ENCODE measurements at regions of chr1 and their contacts with region 1.

Region 1: GRCh38 chr1:55060133-55060999 is 21.0 kb downstream of the PCSK9 start:
- DNase-seq: no peak
- H3K4me3 ChIP-seq: no peak overlapping the region
- H3K27ac ChIP-seq: no peak overlapping the region
- H3K4me1 ChIP-seq: peaks cover 0 to 22% of the 10 kb centered on the region in 2 experiments; a peak in 2 of 4 replicates
- H3K27me3 ChIP-seq: no peaks in the 10 kb centered on the region
- CTCF ChIP-seq: no peak
- EP300 ChIP-seq: no peak
- RAD21 ChIP-seq: no peak

Region 2: DNA sequence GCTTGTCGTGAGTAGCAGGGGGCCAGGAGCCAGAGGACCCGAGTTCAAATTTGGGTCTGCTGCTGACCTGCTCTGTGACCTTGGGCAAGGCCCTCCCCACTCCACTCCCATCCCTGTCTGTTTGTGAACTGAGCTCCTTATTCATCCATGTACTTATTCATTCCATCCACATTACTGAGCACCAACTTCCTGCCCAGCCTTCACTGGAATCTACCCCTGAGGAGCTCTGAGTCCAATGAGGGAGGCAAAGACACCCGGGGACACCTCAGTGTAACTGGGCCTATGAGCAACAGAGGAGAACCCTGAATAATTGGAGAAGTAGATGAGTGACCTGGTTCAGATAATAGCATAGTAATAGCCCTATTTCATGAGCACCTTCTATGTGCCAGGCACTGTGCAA is 52.7 kb before region 1 on chr1:
- CTCF ChIA-PET with region 1: no interaction called
- POLR2A ChIA-PET with region 1: no interaction called
- DNase-seq: no peak
- H3K4me3 ChIP-seq: no peak overlapping the region
- H3K27ac ChIP-seq: 0 out of 4 replicates have a peak overlapping the region, but pooled peaks of 1 of the 2 experiments have one; percentile 3
- H3K4me1 ChIP-seq: peaks cover 0 to 4% of the 10 kb centered on the region in 2 experiments; a peak in 1 of 4 replicates
- H3K27me3 ChIP-seq: no peaks in the 10 kb centered on the region
- CTCF ChIP-seq: no peak
- EP300 ChIP-seq: no peak
- RAD21 ChIP-seq: no peak

Region 3: DNA sequence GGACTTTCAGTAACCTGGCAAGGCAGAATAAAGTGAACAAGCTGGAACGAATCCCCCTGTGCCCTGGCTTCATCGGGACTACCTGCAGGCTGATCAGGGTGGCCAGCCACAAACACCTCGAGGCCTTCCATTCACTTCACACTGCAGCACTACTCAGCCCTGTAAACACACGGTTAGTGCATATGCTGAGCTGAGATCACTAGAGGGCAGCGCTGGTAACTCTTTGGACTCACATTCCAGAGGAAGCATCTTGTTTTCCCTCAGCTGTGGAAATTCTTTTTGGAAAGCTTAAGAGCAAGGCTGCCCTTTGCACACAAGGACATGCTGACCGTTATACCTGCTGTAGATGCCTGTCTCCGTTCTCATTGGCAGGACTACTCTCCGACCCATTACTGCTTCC is 11.1 kb after region 1 on chr1:
- CTCF ChIA-PET with region 1: interaction called, 15 read pairs
- POLR2A ChIA-PET with region 1: no interaction called
- DNase-seq: peak; percentile 53
- H3K4me3 ChIP-seq: no peak overlapping the region
- H3K27ac ChIP-seq: no peak overlapping the region; a peak in 1 of 4 replicates
- H3K4me1 ChIP-seq: peaks cover 0 to 8% of the 10 kb centered on the region in 2 experiments; a peak in 1 of 4 replicates
- H3K27me3 ChIP-seq: no peaks in the 10 kb centered on the region
- CTCF ChIP-seq: peak; percentile 61
- EP300 ChIP-seq: no peak
- RAD21 ChIP-seq: peak; percentile 54

Region 4: GRCh38 chr1:55107101-55107500 is 46.7 kb after region 1 on chr1:
- CTCF ChIA-PET with region 1: no interaction called
- POLR2A ChIA-PET with region 1: no interaction called
- DNase-seq: no peak
- H3K4me3 ChIP-seq: no peak overlapping the region
- H3K27ac ChIP-seq: no peak overlapping the region
- H3K4me1 ChIP-seq: no peaks in the 10 kb centered on the region
- H3K27me3 ChIP-seq: no peaks in the 10 kb centered on the region
- CTCF ChIP-seq: no peak
- EP300 ChIP-seq: no peak
- RAD21 ChIP-seq: no peak